Naive thymus-derived CD8-positive, alpha-beta T cell (primary cell): ENCODE measurements at regions of chr12 and their contacts with region 1.

Region 1: GRCh38 chr12:1488908-1489381 is 105.4 kb downstream of the FBXL14 start:
- DNase-seq: peak in 7 of 10 donors; percentile 18 to 66 (median 48)
- ATAC-seq: peak; percentile 93 to 94
- H3K4me3 Mint-ChIP-seq: peak overlapping the region; percentile 4 to 82 (median 75)
- H3K27ac Mint-ChIP-seq: peak overlapping the region; percentile 88 to 97 (median 96)
- H3K4me1 Mint-ChIP-seq: peaks cover 15 to 36% (median 31%) of the 10 kb centered on the region in 4 donors
- H3K27me3 Mint-ChIP-seq: no peaks in the 10 kb centered on the region

Region 2: DNA sequence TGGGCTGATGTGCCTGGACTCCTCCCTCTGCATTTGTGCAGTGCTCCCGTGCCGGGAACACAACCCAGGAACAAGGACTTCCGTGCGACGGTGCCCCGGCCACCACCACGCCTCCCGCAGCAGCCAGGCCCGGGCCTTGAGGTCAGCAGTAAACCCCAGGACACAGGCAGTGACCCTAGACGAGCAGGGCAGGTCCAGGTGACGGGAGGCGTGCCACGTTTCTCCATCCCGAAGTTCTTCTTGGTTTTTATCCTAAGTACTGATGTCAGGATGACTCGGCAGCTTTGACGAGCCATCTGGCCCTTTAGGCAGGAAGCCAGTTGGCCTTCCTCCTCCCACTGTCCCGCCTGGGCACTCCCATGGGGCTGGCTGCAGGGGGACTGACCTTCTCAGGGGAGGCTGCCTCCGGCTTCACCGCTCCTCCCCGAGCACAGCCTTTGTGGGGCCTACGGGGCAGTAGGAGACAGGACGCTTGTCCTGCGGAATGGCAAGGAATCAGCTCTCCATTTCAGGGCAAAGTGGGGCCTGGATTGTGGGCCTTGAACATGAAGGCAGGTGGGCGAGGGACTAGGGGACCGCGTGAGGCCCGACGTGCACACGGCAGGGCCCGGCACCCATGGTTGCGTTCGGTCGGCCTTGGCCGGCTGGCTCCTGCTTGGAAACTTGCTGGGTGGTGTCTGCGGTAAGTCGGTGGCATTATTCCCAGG is 11.3 kb after region 1 on chr12:
- POLR2A ChIA-PET with region 1: no interaction called
- DNase-seq: no peak
- ATAC-seq: no peak
- H3K4me3 Mint-ChIP-seq: no peak overlapping the region
- H3K27ac Mint-ChIP-seq: no peak overlapping the region
- H3K4me1 Mint-ChIP-seq: peaks cover 9 to 12% (median 10%) of the 10 kb centered on the region in 4 donors
- H3K27me3 Mint-ChIP-seq: peaks cover 9 to 34% (median 20%) of the 10 kb centered on the region in 5 donors

Region 3: DNA sequence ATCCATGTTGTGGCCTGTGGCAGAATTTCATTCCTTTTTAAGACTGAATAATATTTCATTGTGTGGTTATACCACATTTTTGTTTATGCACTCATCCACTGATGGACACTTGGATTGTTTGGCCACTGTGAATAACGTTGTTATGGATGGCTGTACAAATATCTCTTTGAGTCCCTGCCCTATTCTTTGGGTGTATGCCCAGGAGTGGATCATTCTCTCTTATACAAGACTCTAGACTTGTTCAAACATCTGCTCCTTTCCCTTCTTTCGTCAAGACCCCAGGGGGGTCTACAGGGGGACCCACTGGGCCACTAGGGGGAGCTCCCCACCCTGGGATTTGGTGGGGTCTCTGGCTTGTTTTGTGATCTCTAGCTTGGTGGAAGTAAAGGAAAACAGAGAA is 28.1 kb after region 1 on chr12:
- POLR2A ChIA-PET with region 1: no interaction called
- DNase-seq: no peak
- ATAC-seq: no peak
- H3K4me3 Mint-ChIP-seq: no peak overlapping the region
- H3K27ac Mint-ChIP-seq: no peak overlapping the region
- H3K4me1 Mint-ChIP-seq: peaks cover 0 to 6% (median 1%) of the 10 kb centered on the region in 4 donors
- H3K27me3 Mint-ChIP-seq: peaks cover 4 to 24% (median 15%) of the 10 kb centered on the region in 5 donors

Region 4: GRCh38 chr12:1594261-1595025 is 105.5 kb after region 1 on chr12 and contains the start of gene FBXL14:
- POLR2A ChIA-PET with region 1: interaction called, 10 read pairs
- DNase-seq: peak; percentile 85 to 96 (median 92)
- ATAC-seq: peak; percentile 67 to 69
- H3K4me3 Mint-ChIP-seq: peak within 1 kb of the TSS; percentile 89 to 97 (median 96)
- H3K27ac Mint-ChIP-seq: peak within 1 kb of the TSS; percentile 91 to 99 (median 97)
- H3K4me1 Mint-ChIP-seq: peaks cover 28 to 55% (median 51%) of the 10 kb centered on the region in 4 donors
- H3K27me3 Mint-ChIP-seq: no peaks in the 10 kb centered on the region
- polyA plus RNA-seq, gene FBXL14: 12.1 to 24.5 (median 16.6) TPM